Sciatic nerve (tissue), 2 donors: ENCODE measurements at regions of chr7 and their contacts with region 1.

Region 1: DNA sequence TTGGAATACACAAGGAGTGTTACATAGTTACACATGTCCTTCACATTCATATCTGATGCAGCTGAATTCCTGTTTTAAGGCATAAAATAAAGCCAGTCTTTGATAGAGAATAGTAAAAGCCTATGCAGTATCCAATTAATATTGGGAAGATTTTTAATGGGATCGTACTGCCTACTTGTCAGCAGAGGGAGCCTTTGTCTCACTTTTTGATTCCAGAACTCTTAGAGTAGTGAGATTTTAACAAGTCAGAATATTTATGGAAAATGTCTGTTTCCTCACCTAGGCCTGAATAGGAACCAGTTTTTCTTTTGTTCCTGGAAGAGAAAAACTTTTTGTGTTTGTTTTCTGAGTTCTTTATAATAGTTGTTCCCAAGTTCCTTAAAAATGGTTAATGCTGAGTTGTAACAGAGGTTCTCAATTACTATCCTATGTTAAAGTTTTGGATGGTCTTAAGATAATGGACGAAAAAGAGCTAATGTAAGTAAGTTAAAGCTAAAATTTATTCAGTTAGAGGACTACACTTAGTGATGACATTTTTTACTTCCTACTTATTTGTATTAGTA is 114.0 kb downstream of the BBS9 start:
- DNase-seq: no peak
- ATAC-seq: peak; percentile 83

Region 2: DNA sequence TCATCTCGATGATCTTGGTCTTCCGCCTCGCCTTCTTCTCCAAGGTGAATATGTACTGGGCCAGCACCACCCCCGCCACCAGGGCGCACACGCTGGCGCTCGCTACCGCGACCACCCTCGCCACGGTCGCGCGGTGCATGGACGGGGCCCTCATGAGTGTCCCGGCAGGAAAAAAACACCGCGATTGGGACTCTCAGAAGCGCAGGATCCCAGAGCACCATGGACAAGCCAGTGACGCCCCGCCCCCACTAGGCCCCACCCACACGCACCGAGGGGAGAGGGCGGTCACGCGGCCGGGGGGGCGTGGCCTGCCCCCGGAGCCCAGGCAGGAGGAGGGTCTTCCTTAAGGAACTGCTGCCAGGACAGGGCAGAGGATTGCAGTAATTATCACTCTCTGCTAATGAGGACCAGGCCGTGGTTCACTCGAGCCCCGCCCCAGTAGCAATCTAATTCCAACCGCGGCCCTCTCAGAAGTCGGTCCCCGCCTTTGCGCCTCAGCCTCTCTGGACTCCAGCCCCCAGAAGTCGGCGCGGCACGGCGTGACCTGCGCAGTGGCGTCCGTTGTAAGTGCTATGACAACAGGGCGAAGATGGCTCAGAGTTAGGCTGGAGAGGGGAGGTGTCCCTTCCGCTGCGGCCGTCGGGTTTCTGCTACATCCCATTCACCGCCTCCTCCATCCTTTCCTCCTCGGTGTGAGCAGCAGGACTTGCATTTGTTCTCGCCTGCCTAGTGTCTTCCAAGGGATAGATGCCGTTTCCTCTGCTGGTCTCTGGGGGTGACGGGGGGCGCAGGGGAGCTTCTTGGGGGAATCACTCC is 114.2 kb before region 1 on chr7 and contains the start of gene BBS9:
- intact Hi-C with region 1: no loop called
- DNase-seq: peak; percentile 97
- ATAC-seq: peak; percentile 99
- total RNA-seq, gene BBS9: 43.8 TPM

Region 3: GRCh38 chr7:33744293-33745075 is 501.1 kb after region 1 on chr7:
- intact Hi-C with region 1: loop called (anchors 10 kb)
- DNase-seq: no peak
- ATAC-seq: peak; percentile 37